Caco-2 (cell line): ENCODE measurements at regions of chr14 and their contacts with region 1.

Region 1: GRCh38 chr14:104689109-104689880 is at the start of gene INF2:
- DNase-seq: peak; percentile 81 to 84
- H3K4me3 ChIP-seq: peak within 1 kb of the TSS; percentile 90
- H3K4me3 Mint-ChIP-seq: peak within 1 kb of the TSS; percentile 77
- H3K27ac Mint-ChIP-seq: peak within 1 kb of the TSS; percentile 96
- H3K4me1 ChIP-seq: peaks cover 39% of the 10 kb centered on the region
- H3K4me1 Mint-ChIP-seq: peaks cover 26% of the 10 kb centered on the region
- H3K27me3 ChIP-seq: no peaks in the 10 kb centered on the region
- H3K27me3 Mint-ChIP-seq: no peaks in the 10 kb centered on the region
- CTCF ChIP-seq: peak in 1 of 2 experiments; percentile 28
- total RNA-seq, gene INF2: 70.8 TPM in 2 replicates

Region 2: GRCh38 chr14:104650057-104650981 is 39.0 kb before region 1 on chr14:
- CTCF ChIA-PET with region 1: interaction called, 3 read pairs
- POLR2A ChIA-PET with region 1: interaction called, 3 read pairs
- intact Hi-C with region 1: loop called (anchors 5 kb)
- DNase-seq: peak; percentile 59 to 80
- H3K4me3 ChIP-seq: peak overlapping the region; percentile 44
- H3K4me3 Mint-ChIP-seq: peak overlapping the region; percentile 67
- H3K27ac Mint-ChIP-seq: no peak overlapping the region
- H3K4me1 ChIP-seq: peaks cover 4% of the 10 kb centered on the region; the same call in 1 of the 2 replicates
- H3K4me1 Mint-ChIP-seq: no peaks in the 10 kb centered on the region
- H3K27me3 ChIP-seq: no peaks in the 10 kb centered on the region
- H3K27me3 Mint-ChIP-seq: no peaks in the 10 kb centered on the region
- CTCF ChIP-seq: peak; percentile 99

Region 3: GRCh38 chr14:104665657-104666522 is 23.4 kb before region 1 on chr14:
- CTCF ChIA-PET with region 1: interaction called, 11 read pairs
- POLR2A ChIA-PET with region 1: interaction called, 18 read pairs
- intact Hi-C with region 1: no loop called
- DNase-seq: peak; percentile 76 to 90
- H3K4me3 ChIP-seq: no peak overlapping the region
- H3K4me3 Mint-ChIP-seq: no peak overlapping the region
- H3K27ac Mint-ChIP-seq: peak overlapping the region; percentile 83
- H3K4me1 ChIP-seq: peaks cover 18% of the 10 kb centered on the region
- H3K4me1 Mint-ChIP-seq: peaks cover 8% of the 10 kb centered on the region
- H3K27me3 ChIP-seq: no peaks in the 10 kb centered on the region
- H3K27me3 Mint-ChIP-seq: no peaks in the 10 kb centered on the region
- CTCF ChIP-seq: no peak

Region 4: GRCh38 chr14:104677512-104678332 is 11.6 kb before region 1 on chr14:
- CTCF ChIA-PET with region 1: interaction called, 10 read pairs
- POLR2A ChIA-PET with region 1: interaction called, 23 read pairs
- intact Hi-C with region 1: no loop called
- DNase-seq: peak; percentile 72 to 75
- H3K4me3 ChIP-seq: peak overlapping the region; percentile 66
- H3K4me3 Mint-ChIP-seq: peak overlapping the region; percentile 80
- H3K27ac Mint-ChIP-seq: peak overlapping the region; percentile 93
- H3K4me1 ChIP-seq: peaks cover 60% of the 10 kb centered on the region
- H3K4me1 Mint-ChIP-seq: peaks cover 31% of the 10 kb centered on the region
- H3K27me3 ChIP-seq: no peaks in the 10 kb centered on the region
- H3K27me3 Mint-ChIP-seq: no peaks in the 10 kb centered on the region
- CTCF ChIP-seq: no peak

Region 5: DNA sequence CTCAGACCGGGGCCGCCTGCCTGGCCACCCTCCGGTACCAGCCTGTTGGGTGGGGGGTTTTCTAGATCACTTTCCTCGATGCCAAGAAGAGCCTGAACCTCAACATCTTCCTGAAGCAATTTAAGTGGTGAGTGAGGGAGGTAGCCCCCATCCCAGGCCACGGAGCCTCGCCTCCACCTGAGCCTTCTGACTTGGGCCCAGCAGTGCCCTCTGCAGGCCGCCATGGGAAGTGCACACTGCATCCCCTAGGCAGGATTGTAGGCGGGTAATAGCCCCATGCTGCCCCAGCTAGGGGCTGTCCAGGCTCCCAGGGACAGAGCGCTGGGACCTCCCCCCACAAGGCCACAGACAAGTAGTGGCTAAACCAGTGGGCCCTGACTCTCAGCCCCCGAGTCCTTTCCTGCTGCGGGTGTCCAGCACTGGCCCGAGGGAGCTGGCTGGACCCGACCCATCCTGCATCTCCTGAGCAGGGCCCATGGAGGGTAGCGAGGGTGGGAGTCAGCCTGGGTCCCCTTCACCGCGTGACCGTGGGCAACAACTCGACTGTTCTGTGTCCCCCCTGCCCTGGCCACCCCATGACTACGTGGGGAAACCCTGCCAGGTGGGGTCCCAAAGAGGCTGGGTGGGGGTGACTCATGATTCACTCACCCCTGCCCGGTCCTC is 19.4 kb after region 1 on chr14:
- CTCF ChIA-PET with region 1: interaction called, 3 read pairs
- POLR2A ChIA-PET with region 1: interaction called, 3 read pairs
- intact Hi-C with region 1: loop called (anchors 1 kb)
- DNase-seq: peak; percentile 70 to 87
- H3K4me3 ChIP-seq: no peak overlapping the region
- H3K4me3 Mint-ChIP-seq: no peak overlapping the region
- H3K27ac Mint-ChIP-seq: peak overlapping the region; percentile 64
- H3K4me1 ChIP-seq: no peaks in the 10 kb centered on the region
- H3K4me1 Mint-ChIP-seq: no peaks in the 10 kb centered on the region
- H3K27me3 ChIP-seq: no peaks in the 10 kb centered on the region
- H3K27me3 Mint-ChIP-seq: no peaks in the 10 kb centered on the region
- CTCF ChIP-seq: peak; percentile 95 to 96

Region 6: DNA sequence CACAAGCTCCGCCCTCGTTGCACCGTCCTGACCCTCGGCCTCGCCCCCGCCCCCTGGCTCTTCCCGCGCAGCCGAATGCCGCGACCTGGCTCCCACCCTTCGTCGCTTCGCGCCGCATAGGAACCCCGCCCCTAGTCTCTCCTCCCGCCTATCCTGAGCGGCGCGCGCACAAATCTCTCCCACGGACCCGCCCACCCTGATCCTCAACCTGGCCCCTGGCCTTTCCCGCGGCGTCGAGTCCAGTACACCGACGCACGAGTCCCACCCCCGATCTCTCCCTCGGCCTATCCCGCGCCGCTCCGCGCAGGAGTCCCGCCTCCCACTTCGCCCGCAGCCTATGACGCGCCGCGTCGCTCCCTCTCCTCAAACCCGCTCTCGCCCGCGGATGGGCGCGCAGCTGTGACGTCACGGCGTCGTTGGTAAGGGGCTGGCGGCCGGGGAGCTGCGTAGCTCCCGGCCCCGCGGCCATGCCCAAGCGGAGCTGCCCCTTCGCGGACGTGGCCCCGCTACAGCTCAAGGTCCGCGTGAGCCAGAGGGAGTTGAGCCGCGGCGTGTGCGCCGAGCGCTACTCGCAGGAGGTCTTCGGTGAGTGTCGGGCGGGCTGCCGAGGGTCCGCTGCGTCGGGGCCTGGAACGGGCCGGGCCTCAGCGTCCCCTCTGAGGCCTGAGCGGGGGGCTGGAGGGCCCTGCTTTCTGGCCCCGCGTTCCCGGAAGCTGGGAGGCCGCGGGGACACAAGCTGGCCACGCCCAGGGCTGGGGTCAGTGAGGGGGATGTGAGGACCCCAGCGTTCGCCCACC is 63.6 kb after region 1 on chr14 and contains the start of gene SIVA1:
- CTCF ChIA-PET with region 1: interaction called, 5 read pairs
- POLR2A ChIA-PET with region 1: interaction called, 11 read pairs
- intact Hi-C with region 1: loop called (anchors 2 kb)
- DNase-seq: peak; percentile 99
- H3K4me3 ChIP-seq: peak within 1 kb of the TSS; percentile 83
- H3K4me3 Mint-ChIP-seq: peak within 1 kb of the TSS; percentile 90
- H3K27ac Mint-ChIP-seq: peak within 1 kb of the TSS; percentile 93
- H3K4me1 ChIP-seq: peaks cover 32% of the 10 kb centered on the region
- H3K4me1 Mint-ChIP-seq: peaks cover 19% of the 10 kb centered on the region
- H3K27me3 ChIP-seq: no peaks in the 10 kb centered on the region
- H3K27me3 Mint-ChIP-seq: no peaks in the 10 kb centered on the region
- CTCF ChIP-seq: no peak
- total RNA-seq, gene SIVA1: 99.3 and 105 TPM in 2 replicates

Region 7: GRCh38 chr14:104768437-104769323 is 79.4 kb after region 1 on chr14:
- CTCF ChIA-PET with region 1: no interaction called
- POLR2A ChIA-PET with region 1: no interaction called
- intact Hi-C with region 1: no loop called
- DNase-seq: peak; percentile 90 to 95
- H3K4me3 ChIP-seq: no peak overlapping the region
- H3K4me3 Mint-ChIP-seq: peak overlapping the region; percentile 31
- H3K27ac Mint-ChIP-seq: peak overlapping the region; percentile 72
- H3K4me1 ChIP-seq: peaks cover 18% of the 10 kb centered on the region
- H3K4me1 Mint-ChIP-seq: peaks cover 13% of the 10 kb centered on the region
- H3K27me3 ChIP-seq: no peaks in the 10 kb centered on the region
- H3K27me3 Mint-ChIP-seq: no peaks in the 10 kb centered on the region
- CTCF ChIP-seq: peak; percentile 90 to 93